Cardiac septum (tissue), 1 donor: ENCODE measurements at regions of chr17 and their contacts with region 1.

Region 1: DNA sequence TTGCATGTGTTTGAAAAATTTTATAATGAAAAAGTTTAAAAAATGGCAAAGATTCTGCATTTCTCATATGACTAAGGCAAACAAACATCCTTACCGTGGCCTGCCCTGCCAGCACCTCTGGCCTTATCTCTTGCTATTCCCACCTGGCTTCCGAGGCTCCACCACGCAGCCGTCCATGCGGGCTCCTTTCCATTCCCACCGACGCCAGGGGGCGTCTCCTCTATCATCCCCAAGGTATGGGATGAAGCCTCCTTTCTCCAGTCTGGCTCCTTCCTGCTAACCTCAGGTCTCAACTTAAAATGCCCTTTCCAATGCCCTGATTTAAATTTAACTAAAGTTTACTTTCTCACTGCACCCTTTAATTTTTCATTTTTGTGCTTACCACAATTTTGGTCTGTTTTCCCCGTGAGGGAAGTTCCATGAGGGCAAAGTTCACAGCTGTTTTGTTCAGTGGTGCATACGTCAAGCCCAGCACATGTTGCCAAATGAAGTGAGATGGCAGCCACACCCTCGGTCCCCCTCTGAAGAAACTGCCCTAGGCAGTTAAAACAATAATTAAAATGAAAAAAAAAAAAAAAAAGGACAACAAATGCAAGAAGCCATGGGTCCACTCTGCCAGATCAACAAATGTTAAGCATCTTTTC is 13.3 kb upstream of the SDK2 start:
- DNase-seq: no peak

Region 2: GRCh38 chr17:73710095-73710592 is 52.5 kb after region 1 on chr17:
- intact Hi-C with region 1: loop called (anchors 5 kb)
- DNase-seq: peak; percentile 80

Region 3: GRCh38 chr17:73759734-73760438 is 102.3 kb after region 1 on chr17:
- intact Hi-C with region 1: no loop called
- DNase-seq: no peak

Region 4: GRCh38 chr17:73785958-73786743 is 128.6 kb after region 1 on chr17:
- intact Hi-C with region 1: loop called (anchors 5 kb)
- DNase-seq: peak; percentile 66

Region 5: GRCh38 chr17:73841431-73842060 is 184.0 kb after region 1 on chr17:
- intact Hi-C with region 1: loop called (anchors 2 kb)
- DNase-seq: no peak